Sigmoid colon (tissue), 7 donors: ENCODE measurements at regions of chr16 and their contacts with region 1.

Region 1: GRCh38 chr16:84819644-84820324 is at the start of gene CRISPLD2:
- DNase-seq: peak; percentile 99
- H3K4me3 ChIP-seq: peak within 1 kb of the TSS; percentile 66 to 85 (median 78)
- H3K27ac ChIP-seq: peak within 1 kb of the TSS; percentile 96 to 100 (median 98)
- H3K4me1 ChIP-seq: peaks cover 0 to 51% (median 41%) of the 10 kb centered on the region in 4 donors
- H3K27me3 ChIP-seq: no peaks in the 10 kb centered on the region
- CTCF ChIP-seq: no peak
- EP300 ChIP-seq: no peak
- POLR2A ChIP-seq: peak; percentile 99 to 100
- total RNA-seq, gene CRISPLD2: 140 to 545 (median 260) TPM

Region 2: GRCh38 chr16:84294531-84295142 is 525.1 kb before region 1 on chr16 and contains the start of gene WFDC1:
- intact Hi-C with region 1: loop called (anchors 10 kb)
- DNase-seq: peak; percentile 80
- H3K4me3 ChIP-seq: peak within 1 kb of the TSS; percentile 7 to 56 (median 44)
- H3K27ac ChIP-seq: peak within 1 kb of the TSS; percentile 63 to 94 (median 88)
- H3K4me1 ChIP-seq: peaks cover 0 to 83% (median 63%) of the 10 kb centered on the region in 4 donors
- H3K27me3 ChIP-seq: no peaks in the 10 kb centered on the region
- CTCF ChIP-seq: peak in 1 of 4 experiments; percentile 5
- EP300 ChIP-seq: no peak
- POLR2A ChIP-seq: peak in 1 of 2 donors; percentile 47
- total RNA-seq, gene WFDC1: 15.3 to 173 (median 103) TPM

Region 3: GRCh38 chr16:84795329-84796053 is 24.3 kb before region 1 on chr16:
- intact Hi-C with region 1: loop called (anchors 2 kb)
- DNase-seq: peak; percentile 97
- H3K4me3 ChIP-seq: peak overlapping the region; percentile 21 to 39 (median 26)
- H3K27ac ChIP-seq: peak overlapping the region; percentile 74 to 85 (median 80)
- H3K4me1 ChIP-seq: peaks cover 0 to 19% (median 17%) of the 10 kb centered on the region in 4 donors
- H3K27me3 ChIP-seq: no peaks in the 10 kb centered on the region
- CTCF ChIP-seq: no peak
- EP300 ChIP-seq: peak; percentile 60 to 98 (median 84)
- POLR2A ChIP-seq: peak in 1 of 2 donors; percentile 19

Region 4: GRCh38 chr16:85055503-85056210 is 235.9 kb after region 1 on chr16:
- intact Hi-C with region 1: no loop called
- DNase-seq: no peak
- H3K4me3 ChIP-seq: peak overlapping the region; percentile 10 to 36 (median 28)
- H3K27ac ChIP-seq: peak overlapping the region; percentile 76 to 84 (median 79)
- H3K4me1 ChIP-seq: peaks cover 0 to 38% (median 29%) of the 10 kb centered on the region in 4 donors
- H3K27me3 ChIP-seq: no peaks in the 10 kb centered on the region
- CTCF ChIP-seq: no peak
- EP300 ChIP-seq: no peak
- POLR2A ChIP-seq: no peak